Mammary epithelial cell (primary cell): ENCODE measurements at regions of chr4 and their contacts with region 1.

Region 1: GRCh38 chr4:48944756-48945241 is 38.2 kb upstream of the OCIAD2 start:
- DNase-seq: peak; percentile 61
- H3K4me3 ChIP-seq: peak overlapping the region in 2 of 3 experiments; percentile 3 to 15
- H3K27ac ChIP-seq: peak overlapping the region; percentile 90
- H3K4me1 ChIP-seq: peaks cover 36% of the 10 kb centered on the region
- H3K27me3 ChIP-seq: no peaks in the 10 kb centered on the region
- CTCF ChIP-seq: peak; percentile 76 to 83

Region 2: DNA sequence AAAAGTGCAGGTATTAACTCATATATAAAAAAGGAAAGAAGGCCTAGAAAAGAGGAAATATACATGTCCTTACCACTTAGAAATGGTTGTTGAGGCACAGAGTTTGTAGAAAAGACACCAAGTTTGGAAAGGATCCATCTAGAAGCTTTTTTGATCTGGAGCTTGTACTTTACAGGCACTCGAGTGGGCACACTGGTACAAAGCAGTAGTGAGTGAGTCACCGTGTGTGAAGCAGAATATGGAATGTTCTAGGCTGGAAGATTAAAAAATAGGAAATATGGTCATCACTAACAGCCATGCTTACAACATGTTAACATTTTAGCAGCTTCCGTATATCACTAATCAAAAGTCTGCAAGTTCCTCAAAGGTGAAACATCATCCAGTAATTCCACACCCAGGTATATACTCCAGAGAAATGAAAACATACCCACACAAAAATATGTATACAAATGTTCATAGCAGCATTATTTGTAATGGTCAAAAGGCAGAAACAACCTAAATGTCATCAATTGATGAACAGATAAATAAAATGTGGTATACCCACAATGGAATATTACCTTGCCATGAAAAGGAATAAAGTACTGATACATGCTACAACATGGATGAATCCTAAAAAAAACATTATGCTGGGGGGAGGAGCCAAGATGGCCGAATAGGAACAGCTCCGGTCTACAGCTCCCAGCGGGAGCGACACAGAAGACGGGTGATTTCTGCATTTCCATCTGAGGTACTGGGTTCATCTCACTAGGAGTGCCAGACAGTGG is 234.2 kb before region 1 on chr4:
- CTCF ChIA-PET with region 1: interaction called, 12 read pairs
- dilution Hi-C with region 1: no loop called
- in situ Hi-C with region 1: no loop called
- intact Hi-C with region 1: no loop called
- DNase-seq: peak; percentile 28
- H3K4me3 ChIP-seq: no peak overlapping the region
- H3K27ac ChIP-seq: no peak overlapping the region
- H3K4me1 ChIP-seq: peaks cover 6% of the 10 kb centered on the region
- H3K27me3 ChIP-seq: no peaks in the 10 kb centered on the region
- CTCF ChIP-seq: no peak

Region 3: GRCh38 chr4:48742412-48742811 is 202.4 kb before region 1 on chr4:
- CTCF ChIA-PET with region 1: no interaction called
- dilution Hi-C with region 1: no loop called
- in situ Hi-C with region 1: no loop called
- intact Hi-C with region 1: no loop called
- DNase-seq: peak; percentile 25
- H3K4me3 ChIP-seq: no peak overlapping the region
- H3K27ac ChIP-seq: no peak overlapping the region
- H3K4me1 ChIP-seq: peaks cover 12% of the 10 kb centered on the region
- H3K27me3 ChIP-seq: no peaks in the 10 kb centered on the region
- CTCF ChIP-seq: no peak

Region 4: DNA sequence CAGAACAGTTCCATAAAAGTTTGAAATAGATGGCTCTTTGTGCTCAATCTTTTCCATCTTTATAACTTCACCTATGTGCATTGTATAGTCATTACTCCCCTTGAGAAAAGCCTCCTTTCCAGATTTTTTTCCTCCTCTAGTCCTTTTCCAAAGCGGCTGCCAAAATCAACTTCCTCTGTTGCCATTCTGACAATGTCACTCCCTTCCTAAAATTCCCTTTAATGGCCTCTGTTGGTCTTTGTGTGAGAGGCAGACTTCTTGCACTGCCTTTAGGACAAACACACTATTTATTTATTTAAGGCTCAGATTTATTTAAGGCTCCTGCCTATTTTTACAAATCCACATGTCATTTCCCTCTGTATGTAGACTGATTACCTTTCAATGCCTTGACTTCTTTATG is 143.1 kb before region 1 on chr4:
- CTCF ChIA-PET with region 1: no interaction called
- dilution Hi-C with region 1: no loop called
- in situ Hi-C with region 1: no loop called
- intact Hi-C with region 1: no loop called
- DNase-seq: no peak
- H3K4me3 ChIP-seq: no peak overlapping the region
- H3K27ac ChIP-seq: no peak overlapping the region
- H3K4me1 ChIP-seq: peaks cover 7% of the 10 kb centered on the region
- H3K27me3 ChIP-seq: no peaks in the 10 kb centered on the region
- CTCF ChIP-seq: no peak

Region 5: GRCh38 chr4:48899916-48900315 is 44.9 kb before region 1 on chr4:
- CTCF ChIA-PET with region 1: no interaction called
- dilution Hi-C with region 1: loop called (anchors 5 kb)
- in situ Hi-C with region 1: no loop called
- intact Hi-C with region 1: no loop called
- DNase-seq: no peak
- H3K4me3 ChIP-seq: no peak overlapping the region
- H3K27ac ChIP-seq: no peak overlapping the region
- H3K4me1 ChIP-seq: peaks cover 12% of the 10 kb centered on the region
- H3K27me3 ChIP-seq: no peaks in the 10 kb centered on the region
- CTCF ChIP-seq: no peak

Region 6: GRCh38 chr4:48906206-48907173 is 38.3 kb before region 1 on chr4 and contains the start of gene OCIAD2:
- CTCF ChIA-PET with region 1: interaction called, 5 read pairs
- dilution Hi-C with region 1: loop called (anchors 5 kb)
- in situ Hi-C with region 1: no loop called
- intact Hi-C with region 1: loop called (anchors 1 kb)
- DNase-seq: peak; percentile 57
- H3K4me3 ChIP-seq: peak within 1 kb of the TSS; percentile 68 to 80 (median 74)
- H3K27ac ChIP-seq: peak within 1 kb of the TSS; percentile 54
- H3K4me1 ChIP-seq: peaks cover 39% of the 10 kb centered on the region
- H3K27me3 ChIP-seq: no peaks in the 10 kb centered on the region
- CTCF ChIP-seq: peak in 1 of 2 donors; percentile 21
- total RNA-seq, gene OCIAD2: 19.2 to 138 TPM

Region 7: DNA sequence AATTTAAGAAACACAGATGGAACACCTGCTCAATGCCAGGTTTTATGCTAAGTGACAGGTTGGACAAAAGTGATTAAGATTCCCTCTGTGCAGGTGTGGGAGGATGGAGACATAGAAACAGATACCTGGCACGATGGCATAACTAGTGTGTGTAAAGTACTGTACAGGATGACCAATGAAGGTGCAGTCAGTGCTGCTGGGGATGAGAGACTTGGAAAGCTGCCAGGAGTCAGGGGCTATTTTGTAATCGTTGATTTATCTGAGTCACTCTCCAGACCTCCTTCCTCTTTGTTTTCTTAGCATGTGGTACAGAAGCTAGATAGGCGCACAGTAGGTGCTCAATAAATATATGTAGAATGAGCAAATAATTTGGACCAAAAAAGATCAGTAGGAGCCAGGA is 99.5 kb after region 1 on chr4:
- CTCF ChIA-PET with region 1: no interaction called
- dilution Hi-C with region 1: no loop called
- in situ Hi-C with region 1: no loop called
- intact Hi-C with region 1: no loop called
- DNase-seq: peak; percentile 6
- H3K4me3 ChIP-seq: no peak overlapping the region
- H3K27ac ChIP-seq: no peak overlapping the region
- H3K4me1 ChIP-seq: no peaks in the 10 kb centered on the region
- H3K27me3 ChIP-seq: no peaks in the 10 kb centered on the region
- CTCF ChIP-seq: no peak